ENCODE measurements at regions of chr9 and their contacts with region 1.

Region 1: GRCh38 chr9:137302176-137302994 is at the start of gene NRARP:
- DNase-seq: peak; percentile 87 to 90 (median 88)
- H3K4me3 ChIP-seq: peak within 1 kb of the TSS in 1 of 2 donors; percentile 58
- H3K4me3 Mint-ChIP-seq: peak within 1 kb of the TSS in 7 of 8 donors; percentile 58 to 85 (median 66)
- H3K27ac ChIP-seq: peak within 1 kb of the TSS; percentile 15
- H3K27ac Mint-ChIP-seq: peak within 1 kb of the TSS in 1 of 7 donors; percentile 35
- H3K4me1 ChIP-seq: peaks cover 32% of the 10 kb centered on the region
- H3K4me1 Mint-ChIP-seq: peaks cover 3 to 25% (median 14%) of the 10 kb centered on the region in 4 donors
- H3K27me3 ChIP-seq: peaks cover 15% of the 10 kb centered on the region
- H3K27me3 Mint-ChIP-seq: peaks cover 2 to 7% of the 10 kb centered on the region in 2 donors
- total RNA-seq, gene NRARP: 0.25 to 0.29 TPM

Region 2: DNA sequence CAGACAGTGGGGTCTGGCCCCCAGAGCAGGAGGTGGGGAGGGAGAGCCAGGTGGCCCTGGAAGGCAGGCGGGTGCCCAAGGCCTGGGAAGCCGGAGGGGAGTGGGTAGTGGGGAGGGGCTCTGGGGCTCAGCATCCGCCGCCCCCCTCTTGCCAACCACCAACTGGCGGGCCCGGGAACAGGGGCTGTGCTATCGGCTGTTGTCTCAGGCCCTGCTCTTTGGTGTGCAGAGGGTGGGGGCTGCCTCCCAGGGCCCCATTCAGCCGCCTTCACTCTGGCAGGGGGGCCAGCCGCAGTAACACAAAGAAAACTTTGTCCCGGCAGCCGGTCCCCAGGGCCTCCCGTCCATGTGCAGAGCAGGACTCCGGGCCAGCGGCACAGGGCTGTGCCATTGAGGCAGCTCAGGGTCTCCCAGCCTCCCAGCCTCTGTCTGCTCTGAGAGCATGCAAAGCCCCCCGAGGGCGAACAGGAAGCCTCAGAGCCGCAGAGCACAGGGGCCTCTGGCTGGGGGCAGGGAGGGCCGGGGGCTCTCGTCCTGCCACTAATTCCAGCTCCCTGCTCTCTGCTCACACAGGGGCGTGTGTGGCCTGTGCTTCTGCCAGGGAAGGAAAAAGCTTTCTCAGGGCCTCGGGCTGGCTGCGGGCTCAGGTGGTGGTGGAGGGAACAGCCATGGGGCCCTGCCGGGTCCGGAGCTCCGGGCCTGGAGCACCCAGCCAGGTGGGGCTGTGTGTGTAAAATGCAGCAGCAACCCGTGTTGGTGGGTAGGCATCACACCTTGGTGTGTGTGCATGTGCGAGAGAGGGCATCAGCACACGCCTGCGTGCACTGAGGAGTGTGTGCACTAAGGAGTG is 702.3 kb before region 1 on chr9:
- CTCF ChIA-PET with region 1: no interaction called
- POLR2A ChIA-PET with region 1: no interaction called
- intact Hi-C with region 1: no loop called
- DNase-seq: no peak
- H3K4me3 ChIP-seq: no peak overlapping the region
- H3K4me3 Mint-ChIP-seq: no peak overlapping the region
- H3K27ac ChIP-seq: no peak overlapping the region
- H3K27ac Mint-ChIP-seq: no peak overlapping the region
- H3K4me1 ChIP-seq: no peaks in the 10 kb centered on the region
- H3K4me1 Mint-ChIP-seq: no peaks in the 10 kb centered on the region
- H3K27me3 ChIP-seq: no peaks in the 10 kb centered on the region
- H3K27me3 Mint-ChIP-seq: peaks cover 12 to 19% of the 10 kb centered on the region in 2 donors

Region 3: DNA sequence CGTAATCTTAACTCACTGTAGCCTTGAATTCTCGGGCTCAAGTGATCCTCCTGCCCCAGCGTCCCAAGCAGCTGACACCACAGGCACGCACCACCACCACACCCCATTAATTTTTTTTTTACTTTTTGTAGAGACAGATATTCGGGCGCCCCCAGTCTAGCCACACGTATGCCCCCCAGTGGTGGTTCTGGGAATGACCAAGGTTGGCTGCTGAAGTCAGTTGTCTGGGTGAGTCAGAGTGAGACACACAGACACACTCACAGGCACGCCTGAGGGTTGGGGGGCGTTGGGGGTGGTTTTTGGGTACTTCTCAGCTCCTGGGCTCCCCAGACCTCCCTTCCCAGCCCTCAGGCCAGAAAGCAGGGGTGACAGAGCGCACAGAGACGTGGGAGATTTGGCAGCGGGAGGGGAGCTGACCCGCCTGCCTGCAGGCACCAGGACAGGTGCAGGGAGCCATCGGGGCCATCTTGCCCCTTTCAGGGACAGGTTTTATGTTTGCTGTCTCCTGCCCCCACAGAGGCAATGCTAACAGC is 143.0 kb after region 1 on chr9:
- CTCF ChIA-PET with region 1: interaction called, 4 read pairs
- POLR2A ChIA-PET with region 1: no interaction called
- intact Hi-C with region 1: loop called (anchors 1 kb)
- DNase-seq: peak; percentile 74 to 87 (median 80)
- H3K4me3 ChIP-seq: no peak overlapping the region
- H3K4me3 Mint-ChIP-seq: peak overlapping the region in 2 of 8 donors; percentile 56 to 57
- H3K27ac ChIP-seq: no peak overlapping the region
- H3K27ac Mint-ChIP-seq: peak overlapping the region in 4 of 7 donors; percentile 16 to 79 (median 76)
- H3K4me1 ChIP-seq: peaks cover 22% of the 10 kb centered on the region
- H3K4me1 Mint-ChIP-seq: peaks cover 11 to 30% (median 20%) of the 10 kb centered on the region in 4 donors
- H3K27me3 ChIP-seq: no peaks in the 10 kb centered on the region
- H3K27me3 Mint-ChIP-seq: peaks cover 2 to 4% of the 10 kb centered on the region in 2 donors

Region 4: DNA sequence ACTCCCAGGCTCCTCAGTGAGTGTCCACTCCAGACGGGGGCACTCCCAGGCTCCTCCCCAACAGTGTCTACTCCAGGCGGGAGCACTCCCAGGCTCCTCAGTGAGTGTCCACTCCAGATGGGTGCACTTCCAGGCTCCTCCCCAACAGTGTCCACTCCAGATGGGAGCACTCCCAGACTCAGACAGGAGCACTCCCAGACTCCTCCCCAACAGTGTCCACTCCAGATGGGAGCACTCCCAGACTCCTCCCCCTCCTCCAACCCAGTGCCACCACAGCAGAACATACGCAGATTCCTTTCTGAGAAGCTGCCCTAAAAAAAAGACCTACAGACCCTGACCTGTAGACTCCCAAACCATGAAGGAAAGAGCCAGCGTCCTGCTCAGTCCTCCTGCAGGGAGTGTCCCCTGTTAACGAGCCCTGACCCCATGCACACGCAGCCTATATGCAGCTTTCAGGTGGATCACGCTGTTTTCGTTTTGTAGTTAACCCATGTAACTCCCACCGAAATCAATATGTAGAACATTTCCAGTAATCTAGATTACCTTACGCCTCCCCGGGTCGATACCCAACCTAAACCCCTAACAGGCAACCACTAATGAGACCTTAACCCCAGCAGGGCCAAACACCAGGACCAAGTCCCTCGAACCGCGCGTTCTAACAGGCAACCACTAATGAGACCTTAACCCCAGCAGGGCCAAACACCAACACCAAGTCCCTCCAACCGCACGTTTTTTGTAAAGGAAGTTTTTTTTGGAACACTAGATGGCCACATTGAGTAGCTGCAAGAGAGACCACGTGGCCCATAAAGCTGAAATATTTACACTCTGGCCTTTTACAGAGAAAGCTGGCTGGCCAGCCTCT is 232.1 kb after region 1 on chr9:
- CTCF ChIA-PET with region 1: no interaction called
- POLR2A ChIA-PET with region 1: no interaction called
- intact Hi-C with region 1: loop called (anchors 10 kb)
- DNase-seq: peak in 3 of 5 donors; percentile 39 to 40 (median 39)
- H3K4me3 ChIP-seq: no peak overlapping the region
- H3K4me3 Mint-ChIP-seq: peak overlapping the region in 2 of 8 donors; percentile 1 to 2
- H3K27ac ChIP-seq: no peak overlapping the region
- H3K27ac Mint-ChIP-seq: peak overlapping the region in 2 of 7 donors; percentile 48 to 57
- H3K4me1 ChIP-seq: peaks cover 20% of the 10 kb centered on the region
- H3K4me1 Mint-ChIP-seq: peaks cover 17 to 31% (median 22%) of the 10 kb centered on the region in 4 donors
- H3K27me3 ChIP-seq: no peaks in the 10 kb centered on the region
- H3K27me3 Mint-ChIP-seq: no peaks in the 10 kb centered on the region

Measured in CD4-positive, alpha-beta memory T cell (primary cell).